ENCODE measurements at regions of chr3 and their contacts with region 1.

Region 1: DNA sequence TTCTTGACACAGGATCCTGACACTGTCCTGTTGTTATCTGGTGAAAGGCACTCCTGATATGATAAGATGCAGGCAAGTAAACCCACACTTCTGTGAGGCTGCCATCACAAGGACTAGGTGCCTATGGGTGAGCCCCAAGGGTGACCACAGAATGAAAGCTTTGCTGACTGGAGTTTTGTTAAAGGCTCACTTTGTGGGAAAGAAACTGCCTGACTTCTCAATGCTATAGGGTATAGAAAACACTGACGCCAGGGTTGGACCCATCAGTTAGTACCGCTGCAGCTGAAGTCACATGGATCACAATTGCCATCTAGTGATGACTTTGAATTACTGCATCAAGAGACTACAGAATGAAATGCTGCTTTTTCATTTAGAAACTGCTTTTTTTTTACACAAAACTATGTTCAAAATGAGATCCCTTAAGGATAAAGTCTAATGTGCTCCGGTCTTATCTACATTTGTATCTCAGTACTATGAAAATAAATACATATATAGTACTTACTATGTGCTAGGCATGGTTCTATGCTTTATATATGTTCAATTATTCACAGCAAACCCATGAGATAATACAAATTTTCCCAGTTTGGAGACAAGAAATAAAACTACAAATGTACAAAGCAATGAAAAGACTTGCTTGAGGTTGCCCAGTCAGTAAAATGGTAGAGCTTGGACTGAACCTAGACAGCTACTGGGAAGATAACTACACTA is 64.2 kb upstream of the CMSS1 start:
- DNase-seq: no peak
- H3K4me3 Mint-ChIP-seq: no peak overlapping the region
- H3K27ac Mint-ChIP-seq: no peak overlapping the region
- H3K4me1 Mint-ChIP-seq: no peaks in the 10 kb centered on the region
- H3K27me3 Mint-ChIP-seq: peaks cover 10% of the 10 kb centered on the region

Region 2: GRCh38 chr3:99023590-99024192 is 729.7 kb before region 1 on chr3:
- intact Hi-C with region 1: loop called (anchors 2 kb)
- DNase-seq: no peak
- H3K4me3 Mint-ChIP-seq: no peak overlapping the region
- H3K27ac Mint-ChIP-seq: no peak overlapping the region
- H3K4me1 Mint-ChIP-seq: no peaks in the 10 kb centered on the region
- H3K27me3 Mint-ChIP-seq: no peaks in the 10 kb centered on the region

Region 3: DNA sequence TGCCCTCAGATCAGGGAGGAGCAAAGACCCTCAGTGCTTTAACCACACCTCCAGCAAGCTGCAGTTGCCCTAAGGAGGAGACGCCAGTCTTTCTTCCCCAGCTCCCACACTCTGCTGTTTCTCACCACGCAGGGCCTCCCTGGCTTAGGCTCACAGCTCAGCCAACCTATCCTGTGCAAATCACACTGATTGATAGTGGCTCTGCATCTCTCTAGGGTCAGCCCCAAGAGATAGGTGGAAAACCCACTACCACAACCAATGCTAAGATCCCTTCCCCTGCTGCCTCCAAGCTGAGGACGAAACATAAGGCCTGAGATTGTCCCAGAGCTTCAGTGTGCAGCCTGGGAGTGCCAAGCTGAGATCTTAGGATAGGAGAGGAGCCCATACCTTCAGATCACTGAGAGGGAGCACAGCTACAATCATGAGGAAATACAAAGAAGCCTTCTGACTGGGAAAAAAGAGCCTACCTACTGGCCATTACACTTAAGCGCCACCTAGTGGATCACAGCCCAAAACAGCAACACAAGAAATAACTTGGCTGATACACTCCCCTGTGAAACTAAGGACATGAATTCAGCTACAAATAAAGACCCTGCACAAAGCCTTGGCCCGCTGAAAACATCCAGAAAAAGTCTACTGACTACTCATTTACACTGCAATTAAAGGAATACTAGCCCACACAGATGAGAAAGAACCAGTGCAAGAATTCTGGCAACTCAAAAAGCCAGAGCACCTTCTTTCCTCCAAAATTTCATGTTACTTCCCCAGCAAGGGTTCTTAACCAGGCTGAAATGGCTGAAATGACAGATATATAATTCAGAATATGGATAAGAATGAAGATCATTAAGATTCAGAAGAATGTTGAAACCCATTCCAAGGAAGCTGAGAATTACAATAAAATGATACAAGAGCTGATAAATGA is 580.4 kb before region 1 on chr3:
- intact Hi-C with region 1: loop called (anchors 10 kb)
- DNase-seq: no peak
- H3K4me3 Mint-ChIP-seq: no peak overlapping the region
- H3K27ac Mint-ChIP-seq: no peak overlapping the region
- H3K4me1 Mint-ChIP-seq: no peaks in the 10 kb centered on the region
- H3K27me3 Mint-ChIP-seq: no peaks in the 10 kb centered on the region

Region 4: GRCh38 chr3:99499235-99500158 is 253.9 kb before region 1 on chr3:
- intact Hi-C with region 1: loop called (anchors 2 kb)
- DNase-seq: no peak
- H3K4me3 Mint-ChIP-seq: no peak overlapping the region
- H3K27ac Mint-ChIP-seq: no peak overlapping the region
- H3K4me1 Mint-ChIP-seq: no peaks in the 10 kb centered on the region
- H3K27me3 Mint-ChIP-seq: no peaks in the 10 kb centered on the region

Measured in activated T-helper 2 cell treated with anti-CD3 and anti-CD28 coated beads, Interferon-gamma antibody, Interleukin-2, Interleukin-4, amounts not matched to agents 10 μg/mL and 5 μg/mL and 100 μg/mL, durations not matched to agents 14 hours and 24 hours and 36 hours (primary cell).